Activated T-helper 1 cell treated with anti-CD3 and anti-CD28 coated beads, Interleukin-12 subunit alpha, Interleukin-12 subunit beta, Interleukin-2, Interleukin-4 antibody, amounts not matched to agents 30 ng/mL and 10 ng/mL and 1 ng/mL, durations not matched to agents 14 hours and 24 hours and 36 hours (primary cell): ENCODE measurements at regions of chr13 and their contacts with region 1.

Region 1: GRCh38 chr13:102913914-102914313 is 68.1 kb downstream of the ERCC5 start:
- DNase-seq: no peak
- H3K4me3 Mint-ChIP-seq: no peak overlapping the region
- H3K27ac Mint-ChIP-seq: no peak overlapping the region
- H3K4me1 Mint-ChIP-seq: no peaks in the 10 kb centered on the region
- H3K27me3 Mint-ChIP-seq: peaks cover 5% of the 10 kb centered on the region

Region 2: GRCh38 chr13:102870677-102871415 is 43.1 kb before region 1 on chr13:
- intact Hi-C with region 1: loop called (anchors 1 kb)
- DNase-seq: peak; percentile 17
- H3K4me3 Mint-ChIP-seq: no peak overlapping the region
- H3K27ac Mint-ChIP-seq: peak overlapping the region; percentile 13
- H3K4me1 Mint-ChIP-seq: peaks cover 21% of the 10 kb centered on the region
- H3K27me3 Mint-ChIP-seq: no peaks in the 10 kb centered on the region